Activated T-helper 2 cell treated with anti-CD3 and anti-CD28 coated beads, Interferon-gamma antibody, Interleukin-2, Interleukin-4, amounts not matched to agents 10 μg/mL and 5 μg/mL and 100 μg/mL, durations not matched to agents 14 hours and 24 hours and 36 hours (primary cell): ENCODE measurements at regions of chr1 and their contacts with region 1.

Region 1: DNA sequence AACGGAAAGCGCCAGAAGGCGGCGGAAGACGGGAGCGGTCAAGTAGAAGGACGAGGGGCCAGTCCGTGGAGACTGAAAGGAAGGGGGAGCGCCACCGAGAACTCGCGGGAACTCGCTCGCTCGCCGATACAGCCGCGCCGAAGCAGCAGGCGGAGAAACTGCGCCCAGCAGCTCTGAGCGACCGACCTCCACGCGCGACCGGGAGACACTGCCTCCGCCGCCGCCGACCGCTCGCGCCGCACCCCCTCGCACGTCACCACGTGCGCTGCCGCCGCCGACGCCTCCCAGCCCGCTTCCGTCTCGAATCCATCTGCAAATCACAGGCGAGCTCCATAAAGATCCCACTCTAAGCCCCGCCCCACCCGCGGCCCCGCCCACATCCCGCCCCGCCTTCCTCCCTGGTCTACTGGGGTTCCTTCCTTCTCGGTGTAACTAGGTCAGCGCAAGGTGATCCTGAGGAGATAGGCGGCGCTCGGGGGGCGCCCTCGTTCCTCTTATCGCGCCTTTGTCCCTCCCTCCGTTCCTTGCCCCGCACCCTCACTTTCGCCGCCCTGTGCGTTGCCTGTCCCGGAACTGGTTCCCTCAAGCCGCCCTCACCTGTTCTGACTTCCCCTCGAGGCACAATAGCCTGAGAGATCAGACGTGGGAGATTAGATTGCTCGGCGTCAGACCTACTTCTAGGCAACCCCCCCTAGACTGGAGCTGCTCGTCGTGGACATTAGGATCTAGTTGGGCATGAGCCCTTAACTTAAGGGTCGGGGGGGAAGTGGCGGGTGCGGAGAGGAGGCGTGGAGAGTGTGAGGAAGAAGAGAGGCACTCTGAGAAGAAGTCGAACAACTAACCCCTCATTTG is at the start of gene IVNS1ABP:
- DNase-seq: peak; percentile 93
- H3K4me3 Mint-ChIP-seq: peak within 1 kb of the TSS; percentile 90
- H3K27ac Mint-ChIP-seq: peak within 1 kb of the TSS; percentile 98
- H3K4me1 Mint-ChIP-seq: peaks cover 37% of the 10 kb centered on the region
- H3K27me3 Mint-ChIP-seq: no peaks in the 10 kb centered on the region
- total RNA-seq, gene IVNS1ABP: 143 and 148 TPM in 2 replicates

Region 2: GRCh38 chr1:184002071-184002470 is 1315.2 kb before region 1 on chr1:
- intact Hi-C with region 1: no loop called
- DNase-seq: no peak
- H3K4me3 Mint-ChIP-seq: no peak overlapping the region
- H3K27ac Mint-ChIP-seq: no peak overlapping the region
- H3K4me1 Mint-ChIP-seq: peaks cover 2% of the 10 kb centered on the region
- H3K27me3 Mint-ChIP-seq: peaks cover 6% of the 10 kb centered on the region

Region 3: GRCh38 chr1:184881941-184882913 is 435.0 kb before region 1 on chr1:
- intact Hi-C with region 1: loop called (anchors 2 kb)
- DNase-seq: no peak
- H3K4me3 Mint-ChIP-seq: peak overlapping the region; percentile 1
- H3K27ac Mint-ChIP-seq: peak overlapping the region; percentile 90
- H3K4me1 Mint-ChIP-seq: peaks cover 31% of the 10 kb centered on the region
- H3K27me3 Mint-ChIP-seq: peaks cover 5% of the 10 kb centered on the region

Region 4: DNA sequence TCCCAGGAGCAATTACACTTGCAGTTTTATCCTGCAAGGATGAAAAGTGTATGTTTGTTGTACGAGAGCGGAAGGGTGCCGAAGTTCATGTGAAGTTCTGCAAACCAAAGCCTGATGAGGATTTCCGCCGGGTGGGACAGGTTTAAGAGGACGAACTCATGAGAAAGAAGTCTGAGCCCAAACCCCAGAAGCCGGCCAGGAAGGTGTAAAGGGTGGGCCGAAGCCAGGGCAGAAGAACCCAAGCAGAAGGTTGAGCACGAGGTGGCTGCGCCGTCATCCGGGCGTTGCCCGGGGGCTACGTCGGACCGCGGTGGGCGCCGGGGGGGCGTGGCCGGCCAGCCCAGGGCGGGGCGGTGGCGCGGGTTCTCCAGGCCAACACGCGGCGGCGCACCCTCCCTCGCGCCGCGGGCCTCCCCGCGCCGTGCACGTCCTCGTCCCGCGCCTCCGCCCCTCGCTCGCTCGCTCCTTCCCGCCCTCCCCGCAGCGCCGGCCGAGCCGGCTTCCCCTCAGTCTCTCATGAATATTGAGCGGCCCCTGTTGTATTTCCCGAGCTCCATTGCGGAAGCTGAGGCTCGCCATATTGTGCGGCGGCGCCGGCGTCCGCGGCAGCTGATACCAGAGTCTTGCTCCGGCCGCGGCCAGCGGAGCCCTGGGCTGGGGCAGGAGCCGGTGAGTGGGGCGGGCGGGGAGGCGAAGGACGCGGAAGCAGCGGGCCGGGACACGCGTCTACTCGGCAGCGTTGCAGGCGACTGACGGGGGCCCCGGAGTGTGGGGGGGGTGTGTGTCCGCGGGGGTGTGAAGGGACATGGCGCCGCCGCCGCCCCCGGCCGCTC is 272.1 kb before region 1 on chr1 and contains the start of gene RNF2:
- intact Hi-C with region 1: loop called (anchors 2 kb)
- DNase-seq: peak; percentile 67
- H3K4me3 Mint-ChIP-seq: peak within 1 kb of the TSS; percentile 87
- H3K27ac Mint-ChIP-seq: peak within 1 kb of the TSS; percentile 80
- H3K4me1 Mint-ChIP-seq: peaks cover 21% of the 10 kb centered on the region
- H3K27me3 Mint-ChIP-seq: peaks cover 13% of the 10 kb centered on the region
- total RNA-seq, gene RNF2: 25.7 and 30.6 TPM in 2 replicates

Region 5: DNA sequence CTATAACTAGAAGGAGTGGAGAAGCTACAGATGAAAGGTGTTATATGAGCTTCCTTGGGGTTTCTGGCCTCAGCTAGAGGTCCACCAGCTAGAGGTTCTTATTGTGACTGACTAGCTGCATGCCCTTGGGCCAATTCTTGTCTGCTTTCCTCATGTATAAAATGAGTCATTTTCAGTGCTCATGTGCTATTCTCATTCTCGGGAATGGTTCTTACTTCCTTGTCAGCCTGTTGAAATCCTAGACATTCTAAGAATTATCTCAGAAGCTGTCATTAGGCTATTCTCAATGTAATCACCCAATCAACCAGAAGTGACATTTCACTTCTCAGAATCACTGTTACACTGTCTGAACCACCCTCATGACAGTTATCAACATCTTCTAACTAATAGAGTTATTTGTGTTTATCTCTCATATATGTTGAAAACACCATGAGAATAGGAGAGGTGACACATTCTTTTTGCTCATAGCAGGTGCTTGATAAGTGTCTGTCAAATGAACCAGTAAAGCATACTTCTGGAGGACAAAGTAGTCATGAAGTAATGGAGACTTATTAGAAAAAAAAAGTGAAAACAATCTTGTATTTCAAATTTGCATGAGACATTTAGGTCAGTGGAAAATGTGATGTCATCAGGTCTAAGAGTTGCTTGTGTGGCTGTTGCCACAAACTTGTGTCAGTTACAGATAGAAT is 122.6 kb after region 1 on chr1:
- intact Hi-C with region 1: loop called (anchors 1 kb)
- DNase-seq: peak; percentile 44
- H3K4me3 Mint-ChIP-seq: no peak overlapping the region
- H3K27ac Mint-ChIP-seq: no peak overlapping the region
- H3K4me1 Mint-ChIP-seq: peaks cover 19% of the 10 kb centered on the region
- H3K27me3 Mint-ChIP-seq: no peaks in the 10 kb centered on the region

Region 6: GRCh38 chr1:185595835-185596667 is 278.8 kb after region 1 on chr1:
- intact Hi-C with region 1: loop called (anchors 10 kb)
- DNase-seq: peak; percentile 14
- H3K4me3 Mint-ChIP-seq: no peak overlapping the region
- H3K27ac Mint-ChIP-seq: no peak overlapping the region
- H3K4me1 Mint-ChIP-seq: peaks cover 30% of the 10 kb centered on the region
- H3K27me3 Mint-ChIP-seq: no peaks in the 10 kb centered on the region

Region 7: DNA sequence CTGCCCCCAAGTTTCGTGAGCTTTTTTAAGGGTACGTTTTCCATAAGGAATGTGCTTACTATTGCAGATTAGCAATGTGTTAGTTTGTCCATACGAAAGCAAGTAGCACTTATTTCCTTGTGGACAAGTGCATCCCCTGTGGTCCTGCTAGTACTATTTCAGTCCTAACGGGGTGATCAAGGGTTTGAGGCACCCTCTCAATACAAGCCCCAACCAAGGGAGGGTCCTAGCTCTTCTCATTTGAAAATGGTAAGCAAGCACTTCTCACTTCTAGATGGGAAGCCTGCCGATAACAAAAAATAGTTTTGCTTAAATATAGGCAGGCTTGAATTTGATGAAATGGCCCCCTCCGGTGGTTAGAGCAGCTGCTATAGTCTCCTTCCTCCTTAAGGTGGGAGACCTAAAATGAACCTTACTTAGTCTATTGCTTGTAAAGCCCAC is 352.9 kb after region 1 on chr1:
- intact Hi-C with region 1: loop called (anchors 5 kb)
- DNase-seq: no peak
- H3K4me3 Mint-ChIP-seq: no peak overlapping the region
- H3K27ac Mint-ChIP-seq: no peak overlapping the region
- H3K4me1 Mint-ChIP-seq: peaks cover 44% of the 10 kb centered on the region
- H3K27me3 Mint-ChIP-seq: no peaks in the 10 kb centered on the region